Activated T-helper 1 cell treated with anti-CD3 and anti-CD28 coated beads, Interleukin-12 subunit alpha, Interleukin-12 subunit beta, Interleukin-2, Interleukin-4 antibody, amounts not matched to agents 30 ng/mL and 10 ng/mL and 1 ng/mL, durations not matched to agents 14 hours and 24 hours and 36 hours (primary cell): ENCODE measurements at regions of chr3 and their contacts with region 1.

Region 1: GRCh38 chr3:32296256-32297204 is 58.0 kb downstream of the CMTM8 start:
- DNase-seq: peak; percentile 52
- H3K4me3 Mint-ChIP-seq: peak overlapping the region; percentile 43
- H3K27ac Mint-ChIP-seq: peak overlapping the region; percentile 84
- H3K4me1 Mint-ChIP-seq: peaks cover 43% of the 10 kb centered on the region
- H3K27me3 Mint-ChIP-seq: no peaks in the 10 kb centered on the region

Region 2: DNA sequence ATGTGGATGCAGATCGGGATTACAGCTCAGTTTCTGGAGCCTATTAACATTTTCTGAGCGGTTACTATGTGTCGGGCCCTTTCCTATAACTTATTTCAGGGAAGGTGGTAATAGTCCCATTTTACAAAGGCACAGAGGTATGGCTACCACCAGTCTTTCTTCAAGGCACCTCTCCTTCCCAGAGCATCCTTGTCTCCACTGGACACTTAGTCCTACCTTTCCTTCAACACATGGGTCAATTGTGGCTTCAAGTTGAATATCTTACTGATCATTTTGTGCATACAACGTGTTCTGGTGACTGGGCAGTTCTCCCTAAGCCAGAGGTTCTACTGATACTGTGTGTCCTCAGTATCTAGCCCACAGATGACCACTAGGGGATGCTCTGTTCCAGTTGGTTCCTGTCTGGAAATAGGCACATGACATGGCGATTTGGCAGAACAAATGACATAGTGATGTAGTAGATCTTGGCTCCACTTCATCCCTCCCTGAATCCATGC is 118.8 kb before region 1 on chr3:
- intact Hi-C with region 1: loop called (anchors 1 kb)
- DNase-seq: peak; percentile 37
- H3K4me3 Mint-ChIP-seq: no peak overlapping the region
- H3K27ac Mint-ChIP-seq: no peak overlapping the region
- H3K4me1 Mint-ChIP-seq: peaks cover 12% of the 10 kb centered on the region
- H3K27me3 Mint-ChIP-seq: peaks cover 5% of the 10 kb centered on the region

Region 3: GRCh38 chr3:32313723-32314473 is 17.4 kb after region 1 on chr3:
- intact Hi-C with region 1: loop called (anchors 1 kb)
- DNase-seq: peak; percentile 10
- H3K4me3 Mint-ChIP-seq: peak overlapping the region; percentile 69
- H3K27ac Mint-ChIP-seq: peak overlapping the region; percentile 78
- H3K4me1 Mint-ChIP-seq: peaks cover 45% of the 10 kb centered on the region
- H3K27me3 Mint-ChIP-seq: no peaks in the 10 kb centered on the region

Region 4: DNA sequence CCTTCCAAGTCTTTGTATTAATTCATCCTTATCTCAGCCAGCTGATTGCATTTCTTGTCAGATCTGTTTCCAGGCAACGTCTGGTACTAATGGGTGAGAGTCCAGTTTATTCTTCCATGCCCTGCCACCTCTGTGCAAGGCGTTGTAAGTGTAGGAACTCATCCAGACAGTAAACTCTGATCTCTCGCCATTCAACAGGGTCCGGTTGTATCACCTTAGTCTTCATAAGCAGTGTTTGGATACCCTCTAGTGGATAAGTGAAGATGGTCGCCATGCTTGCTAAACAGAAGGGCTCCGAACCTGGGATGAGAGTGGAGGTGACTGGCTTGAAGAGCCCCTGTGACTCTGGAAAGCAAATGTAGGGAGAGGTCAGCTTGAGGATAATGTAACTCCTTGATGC is 43.5 kb after region 1 on chr3:
- intact Hi-C with region 1: loop called (anchors 1 kb)
- DNase-seq: peak; percentile 20
- H3K4me3 Mint-ChIP-seq: no peak overlapping the region
- H3K27ac Mint-ChIP-seq: no peak overlapping the region
- H3K4me1 Mint-ChIP-seq: peaks cover 27% of the 10 kb centered on the region
- H3K27me3 Mint-ChIP-seq: no peaks in the 10 kb centered on the region

Region 5: GRCh38 chr3:32401556-32402081 is 105.1 kb after region 1 on chr3:
- intact Hi-C with region 1: loop called (anchors 1 kb)
- DNase-seq: peak; percentile 58
- H3K4me3 Mint-ChIP-seq: peak overlapping the region; percentile 92
- H3K27ac Mint-ChIP-seq: peak overlapping the region; percentile 98
- H3K4me1 Mint-ChIP-seq: peaks cover 81% of the 10 kb centered on the region
- H3K27me3 Mint-ChIP-seq: no peaks in the 10 kb centered on the region

Region 6: GRCh38 chr3:32570421-32571191 is 274.1 kb after region 1 on chr3 and contains the start of gene DYNC1LI1:
- intact Hi-C with region 1: loop called (anchors 5 kb)
- DNase-seq: peak; percentile 90
- H3K4me3 Mint-ChIP-seq: peak within 1 kb of the TSS; percentile 91
- H3K27ac Mint-ChIP-seq: peak within 1 kb of the TSS; percentile 88
- H3K4me1 Mint-ChIP-seq: peaks cover 22% of the 10 kb centered on the region
- H3K27me3 Mint-ChIP-seq: no peaks in the 10 kb centered on the region
- total RNA-seq, gene DYNC1LI1: 35.9 and 43.3 TPM in 2 replicates